Activated T-helper 2 cell treated with anti-CD3 and anti-CD28 coated beads, Interferon-gamma antibody, Interleukin-2, Interleukin-4, amounts not matched to agents 10 μg/mL and 5 μg/mL and 100 μg/mL, durations not matched to agents 14 hours and 24 hours and 36 hours (primary cell): ENCODE measurements at regions of chr3 and their contacts with region 1.

Region 1: GRCh38 chr3:48656061-48656840 is 6.4 kb downstream of the CELSR3 start:
- DNase-seq: peak; percentile 82
- H3K4me3 Mint-ChIP-seq: peak overlapping the region; percentile 80
- H3K27ac Mint-ChIP-seq: peak overlapping the region; percentile 89
- H3K4me1 Mint-ChIP-seq: peaks cover 5% of the 10 kb centered on the region
- H3K27me3 Mint-ChIP-seq: peaks cover 1% of the 10 kb centered on the region

Region 2: GRCh38 chr3:48086736-48087470 is 569.3 kb before region 1 on chr3:
- intact Hi-C with region 1: no loop called
- DNase-seq: no peak
- H3K4me3 Mint-ChIP-seq: peak overlapping the region; percentile 97
- H3K27ac Mint-ChIP-seq: peak overlapping the region; percentile 91
- H3K4me1 Mint-ChIP-seq: peaks cover 25% of the 10 kb centered on the region
- H3K27me3 Mint-ChIP-seq: peaks cover 2% of the 10 kb centered on the region

Region 3: DNA sequence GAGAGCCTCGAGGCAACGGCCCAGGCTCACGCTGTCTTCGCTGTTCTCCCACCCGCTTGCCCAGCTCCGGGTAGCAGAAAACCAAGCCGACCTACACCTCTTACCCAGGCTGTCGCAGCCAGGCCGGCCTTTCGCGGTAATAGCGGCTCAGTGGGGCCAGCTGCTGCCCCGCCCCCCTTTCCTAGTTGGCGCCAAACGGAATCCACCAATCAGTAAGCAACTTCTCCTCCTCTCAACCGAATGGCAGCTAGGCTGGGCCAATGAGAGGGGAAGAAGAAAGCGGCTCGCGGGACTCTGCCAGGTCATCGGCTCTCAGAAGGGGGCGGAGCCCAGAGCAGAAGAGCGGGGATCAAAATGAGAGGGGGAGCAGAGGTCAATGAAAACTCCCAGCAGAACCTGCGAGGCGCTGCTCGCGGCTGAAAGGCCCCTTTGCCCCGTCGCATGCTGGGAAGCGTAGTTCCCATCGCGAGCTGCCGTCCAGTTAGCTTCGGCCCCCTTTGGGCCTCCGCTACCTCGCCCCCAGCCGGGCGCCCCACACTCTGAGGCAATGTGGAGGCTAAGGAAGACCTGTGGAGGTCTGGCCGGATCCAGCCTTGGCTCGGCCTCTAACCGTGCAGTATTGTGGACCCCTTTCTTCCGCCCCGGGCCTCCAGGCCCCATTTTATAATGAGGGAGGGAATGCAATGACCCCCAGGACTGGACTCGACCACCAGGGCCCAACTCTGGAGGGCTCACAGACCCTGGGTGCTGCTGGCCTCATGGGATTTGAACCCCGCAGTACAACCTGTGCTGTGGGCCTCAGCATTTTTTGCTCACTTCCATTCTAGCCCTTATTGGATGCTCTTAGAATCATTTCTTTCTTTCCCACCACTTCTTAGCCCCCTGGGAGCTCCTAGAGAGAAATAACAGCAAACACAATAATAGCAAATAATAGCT is 467.7 kb before region 1 on chr3 and contains the start of gene CDC25A:
- intact Hi-C with region 1: loop called (anchors 5 kb)
- DNase-seq: peak; percentile 97
- H3K4me3 Mint-ChIP-seq: peak within 1 kb of the TSS; percentile 92
- H3K27ac Mint-ChIP-seq: peak within 1 kb of the TSS; percentile 86
- H3K4me1 Mint-ChIP-seq: peaks cover 23% of the 10 kb centered on the region
- H3K27me3 Mint-ChIP-seq: no peaks in the 10 kb centered on the region
- total RNA-seq, gene CDC25A: 39.1 and 40.5 TPM in 2 replicates

Region 4: GRCh38 chr3:48394391-48394790 is 261.9 kb before region 1 on chr3:
- intact Hi-C with region 1: no loop called
- DNase-seq: no peak
- H3K4me3 Mint-ChIP-seq: no peak overlapping the region
- H3K27ac Mint-ChIP-seq: no peak overlapping the region
- H3K4me1 Mint-ChIP-seq: no peaks in the 10 kb centered on the region
- H3K27me3 Mint-ChIP-seq: peaks cover 24% of the 10 kb centered on the region

Region 5: GRCh38 chr3:48408823-48409281 is 247.4 kb before region 1 on chr3:
- intact Hi-C with region 1: no loop called
- DNase-seq: no peak
- H3K4me3 Mint-ChIP-seq: no peak overlapping the region
- H3K27ac Mint-ChIP-seq: no peak overlapping the region
- H3K4me1 Mint-ChIP-seq: no peaks in the 10 kb centered on the region
- H3K27me3 Mint-ChIP-seq: no peaks in the 10 kb centered on the region

Region 6: DNA sequence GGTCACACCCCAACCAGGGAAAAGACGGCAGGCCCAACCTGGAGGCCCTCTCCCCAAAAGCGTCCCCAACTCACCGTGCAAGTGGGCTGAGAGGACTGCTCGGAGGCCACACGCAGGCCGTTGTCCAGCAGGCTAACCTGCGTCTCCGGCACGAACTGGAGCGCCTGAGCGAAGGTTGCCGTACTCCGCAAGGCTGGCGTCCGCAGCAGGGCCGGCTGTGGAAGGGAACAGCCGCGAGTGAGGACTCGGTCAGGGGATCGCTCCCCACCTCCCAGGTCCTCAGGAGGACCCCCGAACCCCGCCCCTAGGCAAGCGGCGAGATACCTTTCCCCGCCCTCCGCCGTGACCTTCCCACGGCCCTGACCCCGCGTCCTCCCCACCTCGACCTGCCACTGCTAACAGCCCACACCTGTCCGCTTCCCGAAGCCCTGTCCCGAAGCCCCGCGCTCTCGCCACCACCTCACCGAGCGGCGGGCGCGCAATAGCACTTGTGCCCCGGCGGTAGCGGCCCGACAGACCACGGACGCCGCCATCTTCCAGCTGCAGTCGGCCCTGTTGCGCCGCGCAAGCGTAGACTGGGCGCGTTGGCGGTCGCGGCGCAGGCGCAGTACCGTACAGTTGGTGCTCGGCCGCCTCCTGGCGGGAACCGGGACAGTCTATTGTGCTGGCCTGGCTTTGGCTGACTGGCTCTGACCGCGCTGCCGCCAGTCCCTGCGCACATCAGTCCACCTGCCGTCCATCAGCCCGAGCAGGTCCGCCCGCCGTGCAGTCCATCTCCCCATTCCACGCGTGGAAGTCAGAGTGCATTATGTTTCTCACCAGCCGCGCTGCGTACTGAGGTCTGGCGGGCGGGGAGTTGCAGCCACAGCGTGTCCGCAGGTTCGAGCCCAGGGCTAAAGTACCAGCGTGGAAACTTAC is 46.9 kb before region 1 on chr3 and contains the start of gene UQCRC1:
- intact Hi-C with region 1: loop called (anchors 1 kb)
- DNase-seq: peak; percentile 93
- H3K4me3 Mint-ChIP-seq: peak within 1 kb of the TSS; percentile 99
- H3K27ac Mint-ChIP-seq: peak within 1 kb of the TSS; percentile 98
- H3K4me1 Mint-ChIP-seq: peaks cover 21% of the 10 kb centered on the region
- H3K27me3 Mint-ChIP-seq: no peaks in the 10 kb centered on the region
- total RNA-seq, gene UQCRC1: 248 and 273 TPM in 2 replicates

Region 7: GRCh38 chr3:48635222-48636021 is 20.8 kb before region 1 on chr3 and contains the start of gene SLC26A6:
- intact Hi-C with region 1: loop called (anchors 2 kb)
- DNase-seq: peak; percentile 94
- H3K4me3 Mint-ChIP-seq: peak within 1 kb of the TSS; percentile 92
- H3K27ac Mint-ChIP-seq: peak within 1 kb of the TSS; percentile 87
- H3K4me1 Mint-ChIP-seq: peaks cover 21% of the 10 kb centered on the region
- H3K27me3 Mint-ChIP-seq: no peaks in the 10 kb centered on the region
- total RNA-seq, gene SLC26A6: 85.1 and 89.6 TPM in 2 replicates

Region 8: DNA sequence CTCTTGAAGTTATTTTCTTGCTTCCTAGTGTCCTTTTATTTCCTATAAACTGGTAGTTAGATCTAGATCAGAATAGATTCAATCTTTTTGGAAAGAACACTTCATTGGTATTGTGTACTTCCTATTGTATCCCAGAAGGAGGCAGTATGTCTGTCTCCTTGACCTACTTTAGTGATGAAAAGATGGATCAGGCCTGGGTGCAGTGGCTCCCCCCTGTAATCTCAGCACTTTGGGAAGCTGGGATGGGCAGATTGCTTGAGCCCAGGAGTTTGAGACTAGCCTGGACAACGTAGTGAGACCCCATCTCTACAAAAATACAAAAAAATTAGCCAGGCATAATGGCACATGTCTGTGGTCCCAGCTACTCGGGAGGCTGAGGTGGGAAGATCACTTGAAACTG is 910.1 kb after region 1 on chr3:
- intact Hi-C with region 1: no loop called
- DNase-seq: no peak
- H3K4me3 Mint-ChIP-seq: no peak overlapping the region
- H3K27ac Mint-ChIP-seq: no peak overlapping the region
- H3K4me1 Mint-ChIP-seq: no peaks in the 10 kb centered on the region
- H3K27me3 Mint-ChIP-seq: peaks cover 16% of the 10 kb centered on the region